ENCODE measurements at regions of chr12 and their contacts with region 1.

Region 1: GRCh38 chr12:116336542-116337065 is 59.1 kb upstream of the MED13L start:
- DNase-seq: peak; percentile 98 to 100 (median 99)
- H3K4me3 ChIP-seq: no peak overlapping the region
- H3K4me3 Mint-ChIP-seq: peak overlapping the region in 1 of 2 donors; percentile 46
- H3K27ac ChIP-seq: peak overlapping the region; percentile 60 to 81
- H3K27ac Mint-ChIP-seq: peak overlapping the region; percentile 86 to 99 (median 96)
- H3K4me1 ChIP-seq: peaks cover 28 to 30% of the 10 kb centered on the region in 2 donors
- H3K4me1 Mint-ChIP-seq: peaks cover 41% of the 10 kb centered on the region
- H3K27me3 ChIP-seq: no peaks in the 10 kb centered on the region
- H3K27me3 Mint-ChIP-seq: no peaks in the 10 kb centered on the region
- CTCF ChIP-seq: peak; percentile 16

Region 2: DNA sequence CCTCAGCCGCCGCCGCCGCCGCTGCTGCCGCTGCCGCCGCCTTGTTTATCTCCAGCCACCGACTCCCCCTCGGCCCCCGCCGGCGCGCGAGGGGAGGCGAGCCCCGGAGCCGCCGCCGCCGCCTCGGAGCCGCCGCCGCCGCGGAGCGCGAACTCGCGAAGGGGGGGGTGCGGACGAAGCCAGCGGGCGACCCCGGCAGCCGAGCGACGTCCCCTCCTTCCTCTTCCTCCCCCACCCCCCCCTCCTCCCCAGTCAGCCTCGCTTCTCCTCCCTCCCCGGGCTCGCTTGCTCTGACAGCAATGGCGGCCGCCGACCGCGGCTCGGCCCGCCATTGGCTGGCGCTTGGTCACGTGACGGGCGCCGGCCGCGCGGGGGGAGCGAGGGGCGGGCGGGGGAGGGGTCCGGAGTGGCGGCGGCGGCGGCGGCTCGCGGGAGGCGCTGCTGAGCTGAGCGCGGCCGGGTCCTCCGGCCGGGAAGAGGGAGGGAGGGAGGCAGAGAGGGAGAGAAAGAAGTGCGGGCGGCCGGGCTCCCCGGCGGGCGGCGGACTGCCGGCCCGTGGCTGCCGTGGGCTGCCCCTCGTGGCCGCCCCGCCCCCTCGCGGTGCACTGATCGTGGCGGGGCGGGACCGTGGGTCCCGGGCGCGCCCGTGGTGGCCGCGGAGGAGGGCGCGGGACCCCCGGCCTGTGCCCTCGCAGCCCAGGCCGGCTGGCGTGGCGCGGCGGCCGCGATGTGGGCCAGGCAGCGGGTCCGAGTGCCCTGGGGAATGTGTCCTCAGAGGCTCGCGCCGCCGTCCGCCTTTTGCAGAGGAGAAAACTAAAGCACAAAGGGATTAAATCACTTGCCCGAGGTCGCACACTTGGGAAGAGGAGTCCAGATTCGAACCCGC is 59.0 kb before region 1 on chr12 and contains the start of gene MED13L:
- intact Hi-C with region 1: loop called in 1 of 2 experiments (anchors 5 kb)
- DNase-seq: peak; percentile 87 to 90 (median 88)
- H3K4me3 ChIP-seq: peak within 1 kb of the TSS; percentile 83 to 98 (median 94)
- H3K4me3 Mint-ChIP-seq: peak within 1 kb of the TSS; percentile 93 to 99
- H3K27ac ChIP-seq: peak within 1 kb of the TSS; percentile 86 to 94
- H3K27ac Mint-ChIP-seq: peak within 1 kb of the TSS; percentile 95 to 98 (median 96)
- H3K4me1 ChIP-seq: peaks cover 57 to 78% of the 10 kb centered on the region in 2 donors
- H3K4me1 Mint-ChIP-seq: peaks cover 66% of the 10 kb centered on the region
- H3K27me3 ChIP-seq: no peaks in the 10 kb centered on the region
- H3K27me3 Mint-ChIP-seq: peaks cover 0 to 1% (median 1%) of the 10 kb centered on the region in 3 donors
- CTCF ChIP-seq: peak; percentile 37
- polyA plus RNA-seq, gene MED13L: 4.4 to 42.0 (median 7.5) TPM

Region 3: GRCh38 chr12:116294454-116295165 is 42.0 kb before region 1 on chr12:
- intact Hi-C with region 1: loop called in 1 of 2 experiments (anchors 5 kb)
- DNase-seq: no peak
- H3K4me3 ChIP-seq: no peak overlapping the region
- H3K4me3 Mint-ChIP-seq: no peak overlapping the region
- H3K27ac ChIP-seq: no peak overlapping the region
- H3K27ac Mint-ChIP-seq: no peak overlapping the region
- H3K4me1 ChIP-seq: peaks cover 14 to 16% of the 10 kb centered on the region in 2 donors
- H3K4me1 Mint-ChIP-seq: peaks cover 22% of the 10 kb centered on the region
- H3K27me3 ChIP-seq: no peaks in the 10 kb centered on the region
- H3K27me3 Mint-ChIP-seq: peaks cover 0 to 2% (median 1%) of the 10 kb centered on the region in 3 donors
- CTCF ChIP-seq: no peak

Region 4: DNA sequence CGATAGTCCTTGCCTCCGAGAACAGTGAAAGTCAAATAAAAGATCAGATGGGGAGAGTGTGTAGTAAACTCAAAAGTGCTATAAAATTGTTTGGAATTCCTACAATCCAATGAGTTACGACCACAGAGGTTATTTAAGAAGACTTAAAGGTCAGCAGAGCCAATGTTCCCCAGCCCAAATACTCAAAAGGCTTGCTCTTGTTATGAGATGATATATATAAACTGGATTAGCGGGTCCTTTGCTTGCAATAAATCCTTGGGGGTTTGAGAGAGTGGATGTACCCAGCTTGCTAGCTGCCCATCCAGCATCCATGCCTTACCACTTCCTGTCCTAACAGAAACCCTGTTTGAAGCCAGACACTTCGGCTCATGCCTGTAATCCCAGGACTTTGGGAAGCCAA is 30.1 kb before region 1 on chr12:
- intact Hi-C with region 1: loop called in 1 of 2 experiments (anchors 5 kb)
- DNase-seq: no peak
- H3K4me3 ChIP-seq: no peak overlapping the region
- H3K4me3 Mint-ChIP-seq: no peak overlapping the region
- H3K27ac ChIP-seq: no peak overlapping the region
- H3K27ac Mint-ChIP-seq: no peak overlapping the region
- H3K4me1 ChIP-seq: peaks cover 31 to 36% of the 10 kb centered on the region in 2 donors
- H3K4me1 Mint-ChIP-seq: peaks cover 38% of the 10 kb centered on the region
- H3K27me3 ChIP-seq: no peaks in the 10 kb centered on the region
- H3K27me3 Mint-ChIP-seq: peaks cover 0 to 2% (median 0%) of the 10 kb centered on the region in 3 donors
- CTCF ChIP-seq: no peak

Region 5: DNA sequence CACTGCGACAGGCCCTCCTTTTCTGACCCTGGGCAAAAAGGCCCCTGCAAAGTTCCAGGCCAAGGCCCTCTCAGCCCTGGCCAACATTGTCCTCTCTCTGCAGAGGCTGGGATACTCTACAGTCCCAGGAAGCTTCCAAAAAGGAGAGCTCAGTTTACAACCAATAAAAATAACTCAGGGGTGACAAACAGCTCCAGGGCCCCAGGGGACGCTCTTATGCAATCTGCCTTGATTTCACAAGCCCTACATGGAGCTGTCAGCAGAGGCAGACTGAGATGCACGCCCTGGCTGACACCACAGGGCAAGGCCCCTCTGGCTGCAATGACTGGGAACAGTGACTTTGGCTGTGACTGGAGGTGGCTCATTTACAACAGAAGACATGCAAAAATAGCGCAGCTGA is 69.9 kb after region 1 on chr12:
- intact Hi-C with region 1: loop called in 1 of 2 experiments (anchors 10 kb)
- DNase-seq: peak; percentile 92 to 96 (median 95)
- H3K4me3 ChIP-seq: no peak overlapping the region
- H3K4me3 Mint-ChIP-seq: peak overlapping the region in 1 of 2 donors; percentile 21
- H3K27ac ChIP-seq: peak overlapping the region; percentile 77 to 82
- H3K27ac Mint-ChIP-seq: peak overlapping the region; percentile 88 to 96 (median 90)
- H3K4me1 ChIP-seq: peaks cover 67 to 74% of the 10 kb centered on the region in 2 donors
- H3K4me1 Mint-ChIP-seq: peaks cover 67% of the 10 kb centered on the region
- H3K27me3 ChIP-seq: no peaks in the 10 kb centered on the region
- H3K27me3 Mint-ChIP-seq: peaks cover 0 to 5% (median 3%) of the 10 kb centered on the region in 3 donors
- CTCF ChIP-seq: no peak

Region 6: DNA sequence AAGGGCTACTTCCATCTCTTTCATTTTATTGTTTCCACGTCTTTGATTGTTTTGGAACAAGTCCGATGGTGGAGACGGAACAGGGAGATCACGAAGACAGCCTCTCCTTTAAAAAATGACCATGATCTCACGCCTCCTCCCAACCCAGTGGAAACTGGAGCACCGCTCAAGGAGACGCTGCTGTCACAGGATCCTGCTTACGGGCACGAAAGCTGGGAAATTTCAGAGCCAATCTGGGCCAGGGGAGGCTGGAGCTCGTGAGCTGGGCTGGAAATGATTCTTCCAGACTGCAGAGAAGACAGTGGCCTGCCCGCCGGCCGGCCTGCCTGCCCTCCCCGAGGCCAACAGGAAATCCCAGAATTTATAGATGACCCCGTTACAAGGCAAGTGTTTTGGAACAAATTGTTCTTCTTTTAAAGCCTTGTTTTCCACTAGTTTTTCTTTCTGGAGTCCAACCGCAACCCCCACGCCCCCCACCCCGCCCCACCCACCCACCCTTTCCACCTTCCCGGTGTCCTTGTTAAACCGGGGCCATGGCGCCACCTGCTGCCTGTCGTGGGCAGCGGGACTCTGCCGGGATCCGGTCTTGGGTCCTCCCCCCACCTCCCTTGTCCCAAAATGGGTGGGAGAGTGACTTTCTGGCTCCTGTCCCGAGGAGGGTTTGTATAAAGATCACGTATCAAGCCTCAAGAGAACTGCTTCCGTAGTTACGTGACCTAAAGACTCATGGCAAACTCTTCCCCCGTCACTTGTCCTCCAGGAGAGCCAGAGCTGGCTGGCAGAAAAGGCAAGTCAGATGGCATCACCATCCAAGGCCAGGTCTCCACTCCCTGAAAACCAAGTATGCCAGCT is 262.9 kb after region 1 on chr12:
- intact Hi-C with region 1: loop called in 1 of 2 experiments (anchors 5 kb)
- DNase-seq: peak; percentile 70 to 73 (median 71)
- H3K4me3 ChIP-seq: peak overlapping the region in 2 of 3 experiments; percentile 22 to 56
- H3K4me3 Mint-ChIP-seq: peak overlapping the region; percentile 53 to 59
- H3K27ac ChIP-seq: peak overlapping the region in 1 of 2 donors; percentile 86
- H3K27ac Mint-ChIP-seq: peak overlapping the region; percentile 46 to 94 (median 88)
- H3K4me1 ChIP-seq: peaks cover 38 to 44% of the 10 kb centered on the region in 2 donors
- H3K4me1 Mint-ChIP-seq: peaks cover 59% of the 10 kb centered on the region
- H3K27me3 ChIP-seq: no peaks in the 10 kb centered on the region
- H3K27me3 Mint-ChIP-seq: peaks cover 0 to 1% (median 0%) of the 10 kb centered on the region in 3 donors
- CTCF ChIP-seq: peak; percentile 70

Measured in CD14-positive monocyte (primary cell).